ENCODE measurements at regions of chr19 and their contacts with region 1.

Region 1: GRCh38 chr19:16628183-16628983 is at the start of gene MED26:
- DNase-seq: peak; percentile 90 to 93
- ATAC-seq: peak; percentile 82 to 84
- H3K4me3 ChIP-seq: peak within 1 kb of the TSS; percentile 86 to 98 (median 86)
- H3K27ac ChIP-seq: peak within 1 kb of the TSS; percentile 97 to 99 (median 98)
- H3K4me1 ChIP-seq: peaks cover 41 to 49% of the 10 kb centered on the region in 2 donors
- H3K27me3 ChIP-seq: no peaks in the 10 kb centered on the region
- CTCF ChIP-seq: peak in 1 of 5 experiments; percentile 38
- POLR2A ChIP-seq: peak; percentile 91
- total RNA-seq, gene MED26: 5.7 to 15.7 (median 9.4) TPM

Region 2: GRCh38 chr19:16400911-16401591 is 227.3 kb before region 1 on chr19:
- in situ Hi-C with region 1: no loop called
- intact Hi-C with region 1: no loop called
- DNase-seq: peak; percentile 50 to 77
- ATAC-seq: peak; percentile 73 to 79
- H3K4me3 ChIP-seq: no peak overlapping the region
- H3K27ac ChIP-seq: peak overlapping the region; percentile 76 to 86 (median 81)
- H3K4me1 ChIP-seq: peaks cover 14 to 28% of the 10 kb centered on the region in 2 donors
- H3K27me3 ChIP-seq: no peaks in the 10 kb centered on the region
- CTCF ChIP-seq: no peak
- POLR2A ChIP-seq: peak in 1 of 2 donors; percentile 7

Region 3: GRCh38 chr19:16446724-16447368 is 181.5 kb before region 1 on chr19:
- in situ Hi-C with region 1: no loop called
- intact Hi-C with region 1: loop called (anchors 5 kb)
- DNase-seq: peak; percentile 83 to 89
- ATAC-seq: peak; percentile 68 to 82
- H3K4me3 ChIP-seq: no peak overlapping the region
- H3K27ac ChIP-seq: peak overlapping the region; percentile 91 to 99 (median 96)
- H3K4me1 ChIP-seq: peaks cover 59 to 63% of the 10 kb centered on the region in 2 donors
- H3K27me3 ChIP-seq: no peaks in the 10 kb centered on the region
- CTCF ChIP-seq: no peak
- POLR2A ChIP-seq: peak; percentile 53 to 78

Region 4: GRCh38 chr19:16542045-16542909 is 86.1 kb before region 1 on chr19 and contains the start of gene CHERP:
- in situ Hi-C with region 1: no loop called
- intact Hi-C with region 1: loop called (anchors 2 kb)
- DNase-seq: peak; percentile 87 to 90
- ATAC-seq: peak; percentile 96 to 97
- H3K4me3 ChIP-seq: peak within 1 kb of the TSS; percentile 85 to 96 (median 90)
- H3K27ac ChIP-seq: peak within 1 kb of the TSS; percentile 91 to 97 (median 92)
- H3K4me1 ChIP-seq: peaks cover 31 to 49% of the 10 kb centered on the region in 2 donors
- H3K27me3 ChIP-seq: no peaks in the 10 kb centered on the region
- CTCF ChIP-seq: peak in 2 of 5 experiments; percentile 25 to 26
- POLR2A ChIP-seq: peak; percentile 90 to 94
- total RNA-seq, gene CHERP: 7.4 to 12.1 (median 9.8) TPM

Region 5: DNA sequence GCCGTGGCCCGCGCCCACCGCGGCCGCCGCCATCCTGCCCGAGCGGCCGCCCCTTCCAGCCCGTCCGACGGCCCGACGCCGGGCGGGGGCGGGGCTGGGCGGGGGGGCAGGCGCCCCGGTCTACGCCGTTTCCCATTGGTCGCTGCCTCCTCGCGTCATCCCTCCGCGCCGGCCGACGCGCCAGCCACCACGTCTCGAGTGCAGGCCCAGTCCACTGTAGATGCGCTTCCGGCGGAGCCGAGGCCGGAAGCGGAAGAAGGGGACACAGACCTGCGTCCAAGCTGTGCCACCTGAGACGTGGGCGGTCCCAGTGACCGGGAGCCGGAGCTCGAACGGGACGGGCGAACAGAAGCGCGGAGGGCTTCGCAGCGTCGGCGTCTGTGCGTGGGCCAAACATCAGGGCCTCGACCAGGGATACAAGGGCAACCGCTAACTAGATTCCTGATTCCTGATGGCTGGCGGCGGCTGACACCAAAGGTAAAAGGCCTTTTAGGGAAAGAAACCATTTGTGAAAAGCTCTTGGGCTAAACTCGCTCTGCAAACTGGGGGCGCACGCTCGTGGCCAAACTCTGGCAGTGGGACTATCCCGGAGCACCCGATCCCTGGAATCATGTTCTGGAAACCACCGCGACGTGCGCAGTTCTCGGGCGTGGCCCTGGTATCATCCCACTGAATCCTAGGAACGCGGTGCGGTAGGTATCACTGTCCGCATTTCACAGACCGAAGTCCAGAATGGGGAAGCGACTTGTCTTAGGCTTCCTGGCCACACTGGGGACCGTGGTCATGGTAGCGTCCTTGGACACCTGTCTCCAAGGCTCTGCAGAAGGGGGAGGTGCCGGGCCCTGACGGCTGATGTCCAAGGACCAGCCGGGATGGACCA is 55.8 kb before region 1 on chr19 and contains the start of gene SLC35E1:
- in situ Hi-C with region 1: no loop called
- intact Hi-C with region 1: loop called (anchors 2 kb)
- DNase-seq: peak; percentile 94 to 97
- ATAC-seq: peak; percentile 82 to 88
- H3K4me3 ChIP-seq: peak within 1 kb of the TSS; percentile 64 to 82 (median 82)
- H3K27ac ChIP-seq: peak within 1 kb of the TSS; percentile 90 to 97 (median 95)
- H3K4me1 ChIP-seq: peaks cover 48 to 57% of the 10 kb centered on the region in 2 donors
- H3K27me3 ChIP-seq: no peaks in the 10 kb centered on the region
- CTCF ChIP-seq: no peak
- POLR2A ChIP-seq: peak; percentile 88 to 89
- total RNA-seq, gene SLC35E1: 24.1 to 60.3 (median 40.1) TPM

Region 6: DNA sequence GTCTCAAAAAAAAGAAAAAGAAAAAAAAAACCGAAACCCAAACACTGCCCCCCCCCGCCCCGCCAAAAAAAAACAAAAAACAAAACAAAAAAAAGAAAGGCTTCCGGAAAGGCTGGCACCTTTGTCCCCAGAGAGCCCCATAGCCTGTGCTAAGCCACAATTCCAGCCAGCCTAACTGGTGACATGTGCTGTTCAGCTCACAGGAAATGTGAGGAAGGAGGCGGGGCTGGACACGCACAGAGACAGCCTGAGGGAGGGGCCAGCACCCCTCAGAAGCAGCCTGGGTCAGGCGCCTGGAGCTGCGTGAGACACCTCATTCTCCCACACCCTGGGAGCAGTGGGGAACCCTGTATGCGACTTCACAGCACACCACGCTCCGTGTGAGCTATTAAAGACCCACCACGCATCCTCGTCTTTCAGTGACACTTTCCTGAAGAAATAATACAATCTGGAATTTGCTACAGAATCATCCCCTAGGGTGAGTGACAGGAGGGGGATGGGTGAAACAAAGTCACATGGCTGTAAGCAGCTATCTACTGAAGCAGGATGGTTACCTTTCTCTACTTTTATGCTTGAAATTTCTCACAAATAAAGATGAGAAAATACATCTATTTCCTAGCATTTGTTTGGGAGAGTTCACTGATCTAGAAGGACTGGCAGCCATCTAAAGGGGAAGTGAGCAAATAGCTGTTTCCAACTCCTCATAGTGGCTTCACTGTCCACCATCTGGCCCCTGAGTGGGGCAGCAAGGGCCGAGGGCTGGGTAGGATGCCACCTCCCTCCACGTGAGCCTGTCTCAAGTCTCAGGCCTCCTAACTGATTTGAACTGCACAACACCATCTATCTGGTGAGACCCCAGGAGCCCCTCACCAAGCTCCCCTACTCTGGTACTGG is 43.9 kb before region 1 on chr19:
- in situ Hi-C with region 1: no loop called
- intact Hi-C with region 1: loop called (anchors 2 kb)
- DNase-seq: peak; percentile 90 to 91
- ATAC-seq: peak; percentile 59 to 60
- H3K4me3 ChIP-seq: peak overlapping the region; percentile 18 to 47 (median 26)
- H3K27ac ChIP-seq: peak overlapping the region; percentile 94 to 97 (median 95)
- H3K4me1 ChIP-seq: peaks cover 96 to 99% of the 10 kb centered on the region in 2 donors
- H3K27me3 ChIP-seq: no peaks in the 10 kb centered on the region
- CTCF ChIP-seq: no peak
- POLR2A ChIP-seq: peak; percentile 85 to 88

Region 7: GRCh38 chr19:16608290-16608739 is 20.1 kb before region 1 on chr19:
- in situ Hi-C with region 1: no loop called
- intact Hi-C with region 1: loop called (anchors 2 kb)
- DNase-seq: peak; percentile 77 to 78
- ATAC-seq: peak; percentile 86 to 88
- H3K4me3 ChIP-seq: no peak overlapping the region
- H3K27ac ChIP-seq: peak overlapping the region; percentile 79 to 86 (median 84)
- H3K4me1 ChIP-seq: peaks cover 67 to 86% of the 10 kb centered on the region in 2 donors
- H3K27me3 ChIP-seq: no peaks in the 10 kb centered on the region
- CTCF ChIP-seq: no peak
- POLR2A ChIP-seq: no peak

Region 8: DNA sequence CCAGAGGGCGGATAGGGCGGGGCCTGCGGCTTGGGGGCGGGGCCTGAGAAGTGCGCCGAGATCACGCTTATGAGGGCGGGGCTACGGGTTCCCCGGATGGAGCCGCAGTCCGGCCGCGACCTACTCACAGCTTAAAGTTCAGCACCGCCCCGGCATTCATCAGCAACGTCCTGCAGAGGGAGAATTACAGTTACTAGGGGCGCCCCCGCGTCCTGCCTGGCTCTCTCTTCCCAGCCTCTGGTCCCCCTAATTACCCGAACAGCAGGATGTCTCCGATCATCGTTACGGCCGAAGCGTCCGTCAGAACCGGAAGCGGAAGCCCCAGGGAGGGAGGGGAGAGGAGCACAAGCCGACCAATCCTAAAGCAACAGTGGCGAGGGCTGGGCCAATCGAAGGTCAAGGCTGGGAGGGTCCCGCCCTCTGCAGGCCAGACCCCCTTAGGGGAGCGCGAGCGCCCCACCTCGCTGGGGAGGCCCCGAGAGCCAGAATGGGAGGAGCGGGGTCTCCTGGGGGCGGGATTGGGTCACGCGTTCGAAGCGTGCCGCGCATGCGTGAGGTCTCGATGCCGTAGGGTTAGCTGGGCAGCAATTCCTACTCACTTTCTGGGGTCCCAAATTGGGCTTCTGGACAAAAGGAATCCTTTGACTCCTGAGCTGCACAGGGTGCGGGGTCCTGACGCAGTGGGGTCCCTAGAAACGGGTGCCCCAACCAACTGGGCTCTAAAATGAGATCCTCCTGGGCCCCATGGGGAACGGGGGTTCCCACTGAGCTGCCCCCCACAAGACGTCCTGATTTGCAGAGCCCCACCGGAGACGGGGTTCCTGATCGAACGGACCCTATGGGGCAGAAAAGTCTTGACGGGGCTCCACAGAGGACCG is 31.7 kb after region 1 on chr19 and contains the start of gene SMIM7:
- in situ Hi-C with region 1: no loop called
- intact Hi-C with region 1: loop called (anchors 2 kb)
- DNase-seq: peak; percentile 99
- ATAC-seq: peak; percentile 80 to 90
- H3K4me3 ChIP-seq: peak within 1 kb of the TSS; percentile 75 to 95 (median 89)
- H3K27ac ChIP-seq: peak within 1 kb of the TSS; percentile 100
- H3K4me1 ChIP-seq: peaks cover 37 to 38% of the 10 kb centered on the region in 2 donors
- H3K27me3 ChIP-seq: no peaks in the 10 kb centered on the region
- CTCF ChIP-seq: peak in 2 of 5 experiments; percentile 8 to 27
- POLR2A ChIP-seq: peak; percentile 90 to 94
- total RNA-seq, gene SMIM7: 36.4 to 60.5 (median 49.8) TPM